Activated naive CD4-positive, alpha-beta T cell treated with anti-CD3 and anti-CD28 coated beads for 36 hours (primary cell): ENCODE measurements at regions of chr11 and their contacts with region 1.

Region 1: DNA sequence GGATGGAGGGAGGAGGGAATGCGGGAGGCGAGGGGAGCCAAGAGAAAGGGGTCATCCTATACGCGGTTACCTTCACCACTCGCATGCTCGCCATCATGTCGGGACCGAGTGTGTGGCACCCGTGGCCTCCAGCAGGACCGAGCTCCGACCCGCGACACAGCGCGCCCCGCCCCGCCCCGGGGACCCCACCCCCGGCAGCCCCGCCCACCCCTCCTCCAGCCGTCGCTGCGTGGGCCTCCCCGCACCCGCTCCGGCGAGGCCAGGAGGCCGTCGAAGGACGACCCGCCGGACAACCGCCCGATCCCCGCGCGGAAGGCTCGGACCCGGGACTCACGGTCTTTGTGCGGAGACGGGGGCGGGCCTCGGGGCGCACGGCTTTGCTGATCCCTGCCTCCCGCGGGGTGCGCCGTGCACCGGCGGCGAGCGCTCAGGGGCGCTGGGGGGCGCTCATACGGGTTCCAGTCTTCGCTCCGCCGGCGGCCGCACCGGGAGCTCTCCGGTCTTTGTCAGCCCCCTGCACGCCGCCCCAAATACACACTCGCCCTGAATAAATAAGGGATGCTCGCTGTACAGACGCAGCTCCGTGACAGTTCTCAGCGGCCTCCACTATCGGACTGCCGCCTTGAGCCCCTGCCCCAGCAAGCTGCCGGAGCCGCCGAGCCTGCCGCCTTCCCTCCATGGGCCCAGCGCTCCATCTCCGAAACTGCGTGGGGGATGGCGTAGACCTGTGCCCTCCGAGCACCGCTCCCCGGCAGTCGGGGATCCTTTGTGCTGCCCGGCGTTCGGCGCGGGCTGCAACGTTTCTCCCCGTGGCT is at the start of gene UBE2L6:
- DNase-seq: peak; percentile 66
- H3K4me3 Mint-ChIP-seq: peak within 1 kb of the TSS; percentile 97
- H3K27ac Mint-ChIP-seq: peak within 1 kb of the TSS; percentile 96
- H3K4me1 Mint-ChIP-seq: peaks cover 39% of the 10 kb centered on the region
- H3K27me3 Mint-ChIP-seq: no peaks in the 10 kb centered on the region
- total RNA-seq, gene UBE2L6: 187 to 194 TPM

Region 2: GRCh38 chr11:57191314-57192219 is 376.2 kb before region 1 on chr11:
- CTCF ChIA-PET with region 1: no interaction called
- intact Hi-C with region 1: no loop called
- DNase-seq: no peak
- H3K4me3 Mint-ChIP-seq: no peak overlapping the region
- H3K27ac Mint-ChIP-seq: no peak overlapping the region
- H3K4me1 Mint-ChIP-seq: no peaks in the 10 kb centered on the region
- H3K27me3 Mint-ChIP-seq: peaks cover 25% of the 10 kb centered on the region

Region 3: GRCh38 chr11:57345555-57346211 is 222.0 kb before region 1 on chr11:
- CTCF ChIA-PET with region 1: interaction called, 4 read pairs
- intact Hi-C with region 1: loop called (anchors 1 kb)
- DNase-seq: peak; percentile 81
- H3K4me3 Mint-ChIP-seq: no peak overlapping the region
- H3K27ac Mint-ChIP-seq: no peak overlapping the region
- H3K4me1 Mint-ChIP-seq: peaks cover 3% of the 10 kb centered on the region
- H3K27me3 Mint-ChIP-seq: no peaks in the 10 kb centered on the region

Region 4: DNA sequence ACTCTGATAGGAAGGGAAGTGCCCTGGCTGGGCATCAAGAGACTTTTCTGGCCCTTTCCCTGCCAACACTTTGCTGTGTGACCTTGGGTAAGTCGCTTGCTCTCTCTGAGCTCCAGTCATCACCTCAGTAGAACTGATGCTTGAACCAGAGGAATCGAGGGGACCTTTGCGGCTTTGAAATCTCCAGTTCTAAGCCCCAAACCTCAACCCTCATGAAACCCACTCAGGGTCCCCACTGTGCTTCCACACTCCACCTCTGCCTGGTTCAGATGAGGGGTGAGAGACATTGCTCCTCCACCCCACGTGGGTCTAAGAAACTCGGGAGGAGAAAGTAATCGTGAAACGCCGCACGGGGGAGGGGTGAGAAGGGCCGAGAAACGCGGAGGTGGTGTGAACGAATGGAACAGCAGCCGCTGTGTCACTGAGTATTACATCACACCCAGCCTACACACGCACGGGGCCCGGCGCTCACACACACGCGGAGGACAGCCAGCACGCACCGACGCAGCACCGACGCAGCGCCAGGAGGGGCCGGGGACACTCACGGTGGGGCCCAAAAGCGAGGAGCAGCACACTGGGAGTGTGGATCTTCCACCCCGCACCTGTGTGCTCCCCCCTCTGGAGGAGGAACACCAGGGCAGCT is 103.1 kb before region 1 on chr11:
- CTCF ChIA-PET with region 1: no interaction called
- intact Hi-C with region 1: no loop called
- DNase-seq: no peak
- H3K4me3 Mint-ChIP-seq: no peak overlapping the region
- H3K27ac Mint-ChIP-seq: no peak overlapping the region
- H3K4me1 Mint-ChIP-seq: peaks cover 6% of the 10 kb centered on the region
- H3K27me3 Mint-ChIP-seq: peaks cover 13% of the 10 kb centered on the region

Region 5: GRCh38 chr11:57493507-57494503 is 73.9 kb before region 1 on chr11:
- CTCF ChIA-PET with region 1: interaction called, 13 read pairs
- intact Hi-C with region 1: loop called (anchors 2 kb)
- DNase-seq: peak; percentile 93
- H3K4me3 Mint-ChIP-seq: no peak overlapping the region
- H3K27ac Mint-ChIP-seq: peak overlapping the region; percentile 93
- H3K4me1 Mint-ChIP-seq: peaks cover 12% of the 10 kb centered on the region
- H3K27me3 Mint-ChIP-seq: no peaks in the 10 kb centered on the region

Region 6: DNA sequence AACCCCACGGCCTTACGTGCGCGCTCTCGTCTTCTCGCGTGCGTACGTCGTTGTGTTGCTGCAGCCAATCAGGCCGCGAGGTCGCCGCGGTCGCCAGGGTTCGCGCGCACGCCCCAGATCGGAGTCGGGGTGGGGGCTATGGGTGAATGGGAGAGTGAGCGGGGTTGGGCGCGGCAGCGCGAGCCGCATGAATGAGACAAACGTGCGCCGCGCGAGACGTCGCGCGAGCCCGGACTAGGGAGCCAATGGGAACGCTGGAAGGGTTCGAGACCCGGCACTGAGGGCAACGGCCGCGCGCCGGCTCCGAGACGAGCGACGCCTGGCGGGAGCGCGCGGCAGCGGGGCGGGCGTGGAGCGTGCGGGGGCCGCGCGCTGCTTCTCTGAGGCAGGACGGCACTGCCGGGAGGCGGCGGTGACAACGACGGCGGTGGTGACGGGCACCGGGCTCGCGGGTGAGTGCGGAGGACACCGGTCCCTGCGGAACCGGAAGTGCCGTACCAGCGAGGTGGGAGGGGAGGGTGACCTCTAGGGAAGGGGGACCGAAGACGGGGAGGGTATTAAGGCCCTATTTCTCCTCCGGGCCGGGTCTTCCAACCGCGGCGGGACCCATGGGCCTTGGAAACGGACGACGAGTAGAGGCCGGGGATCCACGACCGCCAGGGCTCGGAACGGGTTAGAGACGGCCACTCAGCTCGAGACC is 100.2 kb after region 1 on chr11 and contains the start of gene ZDHHC5:
- CTCF ChIA-PET with region 1: interaction called, 7 read pairs
- intact Hi-C with region 1: loop called (anchors 1 kb)
- DNase-seq: peak; percentile 99
- H3K4me3 Mint-ChIP-seq: peak within 1 kb of the TSS; percentile 91
- H3K27ac Mint-ChIP-seq: peak within 1 kb of the TSS; percentile 97
- H3K4me1 Mint-ChIP-seq: peaks cover 43% of the 10 kb centered on the region
- H3K27me3 Mint-ChIP-seq: no peaks in the 10 kb centered on the region
- total RNA-seq, gene ZDHHC5: 38.5 to 46.6 TPM

Region 7: DNA sequence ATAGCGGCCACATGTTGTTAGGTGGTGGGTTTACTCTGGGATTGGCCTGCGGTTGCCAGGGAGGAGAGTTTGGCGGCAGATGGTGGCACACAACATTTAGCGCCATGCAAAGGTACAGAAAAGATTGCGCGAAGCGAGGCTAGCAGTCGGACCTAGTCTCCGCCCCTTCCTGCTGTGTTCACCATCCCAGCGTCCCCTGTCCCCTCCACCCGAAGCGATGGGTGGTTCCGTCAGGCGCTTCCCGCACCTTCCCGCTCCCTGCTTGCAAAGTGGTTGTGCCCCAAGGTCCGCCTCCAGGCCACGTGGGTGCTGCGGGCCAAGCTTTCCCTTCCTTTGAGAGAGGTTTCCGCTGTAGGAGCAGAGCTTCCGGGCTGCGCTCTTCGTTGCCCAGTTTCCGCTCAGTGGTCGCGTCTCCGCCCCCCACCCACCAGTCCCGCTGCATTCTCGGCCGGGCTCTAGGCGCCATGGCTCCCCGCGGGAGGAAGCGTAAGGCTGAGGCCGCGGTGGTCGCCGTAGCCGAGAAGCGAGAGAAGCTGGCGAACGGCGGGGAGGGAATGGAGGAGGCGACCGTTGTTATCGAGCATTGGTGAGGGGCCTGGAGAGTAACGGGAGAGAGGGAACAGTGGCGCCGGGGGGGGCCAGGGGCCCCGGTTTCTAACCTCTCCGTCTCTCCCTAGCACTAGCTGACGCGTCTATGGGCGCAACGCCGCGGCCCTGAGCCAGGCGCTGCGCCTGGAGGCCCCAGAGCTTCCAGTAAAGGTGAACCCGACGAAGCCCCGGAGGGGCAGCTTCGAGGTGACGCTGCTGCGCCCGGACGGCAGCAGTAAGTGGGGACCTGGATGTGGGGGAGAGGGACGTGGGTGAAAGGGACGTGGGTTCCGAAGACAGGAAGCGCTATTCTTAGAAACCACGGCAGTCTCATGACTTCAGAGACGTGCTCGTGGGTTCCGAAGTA is 173.7 kb after region 1 on chr11 and contains the start of gene SELENOH:
- CTCF ChIA-PET with region 1: interaction called, 4 read pairs
- intact Hi-C with region 1: loop called (anchors 1 kb)
- DNase-seq: peak; percentile 98
- H3K4me3 Mint-ChIP-seq: peak within 1 kb of the TSS; percentile 97
- H3K27ac Mint-ChIP-seq: peak within 1 kb of the TSS; percentile 99
- H3K4me1 Mint-ChIP-seq: peaks cover 32% of the 10 kb centered on the region
- H3K27me3 Mint-ChIP-seq: no peaks in the 10 kb centered on the region
- total RNA-seq, gene SELENOH: 249 to 282 TPM

Region 8: DNA sequence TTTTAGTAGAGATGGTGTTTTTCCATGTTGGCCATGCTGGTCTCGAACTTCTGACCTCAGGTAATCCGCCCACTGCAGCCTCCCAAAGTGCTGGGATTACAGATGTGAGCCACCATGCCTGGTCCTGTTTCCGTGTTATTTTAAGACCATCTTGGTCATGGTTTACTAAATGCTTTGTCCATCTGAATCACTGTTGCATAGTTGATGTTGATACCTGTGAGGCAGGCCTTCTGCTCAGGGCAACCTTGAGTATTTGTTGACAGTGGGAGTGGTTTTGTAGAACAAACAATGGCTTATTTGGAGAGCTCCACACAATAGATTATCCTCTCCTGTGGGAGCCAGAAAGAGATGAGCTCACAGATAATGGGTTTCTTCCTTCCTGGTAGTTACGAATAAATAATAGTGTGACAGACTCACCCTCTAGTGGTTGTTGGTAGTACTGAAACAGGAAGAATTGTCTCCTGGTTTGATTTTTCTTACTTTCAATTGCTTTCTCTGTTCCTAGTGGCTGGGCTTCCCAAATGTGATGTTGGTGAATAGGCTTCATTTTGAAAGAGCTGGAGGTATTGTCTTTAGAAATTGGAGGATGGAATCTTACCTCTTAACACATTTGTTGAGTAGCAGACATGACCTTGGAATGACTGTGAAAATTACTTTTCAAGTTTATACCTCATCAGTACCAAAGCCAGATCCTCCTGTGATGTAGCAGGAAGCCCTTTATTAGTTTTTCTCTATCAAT is 232.9 kb after region 1 on chr11:
- CTCF ChIA-PET with region 1: interaction called, 20 read pairs
- intact Hi-C with region 1: loop called (anchors 1 kb)
- DNase-seq: peak; percentile 12
- H3K4me3 Mint-ChIP-seq: no peak overlapping the region
- H3K27ac Mint-ChIP-seq: peak overlapping the region; percentile 60
- H3K4me1 Mint-ChIP-seq: peaks cover 25% of the 10 kb centered on the region
- H3K27me3 Mint-ChIP-seq: no peaks in the 10 kb centered on the region

Region 9: DNA sequence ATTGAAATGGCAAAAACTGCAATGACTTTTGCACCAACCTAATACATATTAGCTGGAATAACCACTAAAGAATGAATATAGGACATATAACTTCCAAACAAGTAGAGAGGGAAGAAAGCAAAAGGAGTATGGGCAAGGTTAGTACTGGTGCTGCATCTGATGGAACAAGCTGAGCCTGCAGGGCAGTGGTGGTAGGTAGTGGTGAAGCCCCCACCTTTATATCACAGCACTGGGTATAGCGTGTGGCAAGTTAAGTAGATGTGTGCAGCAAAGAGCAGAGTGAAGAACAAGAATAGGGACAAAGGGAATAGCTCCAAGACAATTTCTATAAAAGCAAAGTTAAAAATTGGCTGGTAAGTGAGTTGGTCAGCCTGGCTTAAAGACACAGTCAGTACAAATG is 256.1 kb after region 1 on chr11:
- CTCF ChIA-PET with region 1: no interaction called
- intact Hi-C with region 1: no loop called
- DNase-seq: no peak
- H3K4me3 Mint-ChIP-seq: no peak overlapping the region
- H3K27ac Mint-ChIP-seq: no peak overlapping the region
- H3K4me1 Mint-ChIP-seq: no peaks in the 10 kb centered on the region
- H3K27me3 Mint-ChIP-seq: no peaks in the 10 kb centered on the region

Region 10: GRCh38 chr11:58006940-58007339 is 439.2 kb after region 1 on chr11:
- CTCF ChIA-PET with region 1: no interaction called
- intact Hi-C with region 1: no loop called
- DNase-seq: no peak
- H3K4me3 Mint-ChIP-seq: no peak overlapping the region
- H3K27ac Mint-ChIP-seq: no peak overlapping the region
- H3K4me1 Mint-ChIP-seq: peaks cover 4% of the 10 kb centered on the region
- H3K27me3 Mint-ChIP-seq: peaks cover 19% of the 10 kb centered on the region